Transverse colon (tissue), 4 donors: ENCODE measurements at regions of chr7 and their contacts with region 1.

Region 1: GRCh38 chr7:93435797-93436196 is 138.7 kb downstream of the CALCR start:
- DNase-seq: no peak
- H3K4me3 ChIP-seq: no peak overlapping the region
- H3K27ac ChIP-seq: no peak overlapping the region
- H3K4me1 ChIP-seq: no peaks in the 10 kb centered on the region
- H3K27me3 ChIP-seq: no peaks in the 10 kb centered on the region
- CTCF ChIP-seq: no peak
- EP300 ChIP-seq: no peak
- POLR2A ChIP-seq: no peak

Region 2: DNA sequence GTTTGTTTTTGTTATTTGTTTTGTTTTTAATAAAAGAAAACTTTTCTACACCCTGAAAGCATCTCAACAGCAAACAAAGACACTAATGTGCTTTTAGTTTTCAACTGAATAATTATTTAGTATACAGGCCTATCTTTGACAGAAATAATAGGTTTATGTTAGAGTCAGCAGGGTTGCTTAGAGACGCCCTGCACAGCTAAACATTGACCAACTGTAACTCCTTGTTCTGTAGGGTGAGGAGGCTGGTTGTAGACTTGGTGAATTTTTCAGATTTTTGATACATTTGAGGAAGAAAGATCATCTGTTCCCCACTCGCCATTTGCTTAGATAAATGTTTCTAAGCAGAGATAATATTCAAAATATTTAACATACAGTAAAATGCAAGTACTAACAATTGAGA is 35.7 kb after region 1 on chr7:
- in situ Hi-C with region 1: no loop called
- intact Hi-C with region 1: loop called (anchors 2 kb)
- DNase-seq: no peak
- H3K4me3 ChIP-seq: no peak overlapping the region
- H3K27ac ChIP-seq: no peak overlapping the region
- H3K4me1 ChIP-seq: no peaks in the 10 kb centered on the region
- H3K27me3 ChIP-seq: no peaks in the 10 kb centered on the region
- CTCF ChIP-seq: no peak
- EP300 ChIP-seq: no peak
- POLR2A ChIP-seq: no peak

Region 3: DNA sequence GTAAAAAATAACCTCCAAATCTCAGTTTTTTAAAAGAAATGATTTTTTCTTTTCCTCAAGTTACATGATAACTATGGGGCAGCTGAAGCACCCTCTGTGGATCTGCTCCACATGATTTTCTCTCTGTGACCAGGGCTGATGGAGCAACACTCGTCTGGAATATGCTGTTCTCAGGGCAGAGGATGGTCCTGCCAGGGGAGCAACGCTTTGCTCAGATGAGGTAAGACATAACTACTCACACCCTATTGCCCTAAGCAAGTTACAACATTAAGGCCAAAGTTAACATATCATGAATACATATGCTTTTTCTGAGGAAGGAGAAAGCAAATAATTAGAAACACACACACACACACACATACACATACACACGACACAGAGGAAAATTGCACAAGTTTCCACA is 67.3 kb after region 1 on chr7:
- in situ Hi-C with region 1: no loop called
- intact Hi-C with region 1: no loop called
- DNase-seq: no peak
- H3K4me3 ChIP-seq: no peak overlapping the region
- H3K27ac ChIP-seq: no peak overlapping the region
- H3K4me1 ChIP-seq: no peaks in the 10 kb centered on the region
- H3K27me3 ChIP-seq: no peaks in the 10 kb centered on the region
- CTCF ChIP-seq: no peak
- EP300 ChIP-seq: no peak
- POLR2A ChIP-seq: no peak